ENCODE measurements at regions of chr11 and their contacts with region 1.

Region 1: GRCh38 chr11:3867209-3868091 is 12.0 kb downstream of the STIM1 start:
- DNase-seq: peak; percentile 67
- H3K4me3 ChIP-seq: no peak overlapping the region
- H3K27ac ChIP-seq: peak overlapping the region; percentile 63
- H3K4me1 ChIP-seq: peaks cover 50% of the 10 kb centered on the region
- CTCF ChIP-seq: no peak

Region 2: DNA sequence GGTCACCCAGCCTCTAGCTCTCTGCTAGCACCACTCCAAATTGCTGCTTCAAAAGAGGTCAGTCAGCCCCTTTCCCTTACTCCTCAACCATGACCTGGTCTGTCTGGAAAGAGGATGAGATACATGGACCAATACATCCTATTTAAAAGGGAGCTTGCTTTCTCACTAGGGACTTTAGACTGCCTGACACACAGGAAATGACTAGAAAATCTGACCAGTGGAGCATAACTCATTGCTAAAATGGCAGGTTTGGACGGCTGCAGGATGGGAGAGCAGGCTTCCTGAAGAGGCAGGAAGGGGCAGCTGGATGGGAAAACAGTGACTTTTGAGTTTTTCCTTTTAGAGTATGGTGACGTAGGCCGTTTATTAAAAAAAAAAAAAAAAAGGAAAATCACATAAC is 13.3 kb after region 1 on chr11:
- CTCF ChIA-PET with region 1: interaction called, 4 read pairs
- POLR2A ChIA-PET with region 1: interaction called, 28 read pairs
- intact Hi-C with region 1: no loop called
- DNase-seq: peak; percentile 69
- H3K4me3 ChIP-seq: peak overlapping the region; percentile 35
- H3K27ac ChIP-seq: peak overlapping the region; percentile 12
- H3K4me1 ChIP-seq: peaks cover 55% of the 10 kb centered on the region
- CTCF ChIP-seq: no peak

Region 3: DNA sequence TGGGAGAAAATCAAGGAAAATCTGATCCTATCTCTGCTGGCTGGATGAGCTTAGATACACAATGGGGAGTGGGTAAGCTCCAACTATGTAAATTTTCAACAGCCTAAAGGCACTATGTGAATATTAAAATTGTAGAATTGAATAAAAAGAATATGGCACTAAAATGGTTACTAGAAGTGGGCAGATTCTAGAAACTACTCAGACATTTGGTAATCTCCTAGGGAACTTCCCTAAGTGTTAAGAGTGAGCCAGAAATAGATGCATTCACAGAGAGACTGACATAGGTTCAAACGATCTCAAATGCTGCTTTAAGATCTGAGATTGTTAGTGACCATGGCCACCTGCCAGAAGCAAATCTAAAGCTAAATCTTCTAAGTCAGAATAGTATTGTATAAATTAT is 1197.6 kb after region 1 on chr11:
- CTCF ChIA-PET with region 1: no interaction called
- POLR2A ChIA-PET with region 1: no interaction called
- intact Hi-C with region 1: no loop called
- DNase-seq: no peak
- H3K4me3 ChIP-seq: no peak overlapping the region
- H3K27ac ChIP-seq: no peak overlapping the region
- H3K4me1 ChIP-seq: no peaks in the 10 kb centered on the region
- CTCF ChIP-seq: no peak